Psoas muscle (tissue), 8 donors: ENCODE measurements at regions of chr3 and their contacts with region 1.

Region 1: DNA sequence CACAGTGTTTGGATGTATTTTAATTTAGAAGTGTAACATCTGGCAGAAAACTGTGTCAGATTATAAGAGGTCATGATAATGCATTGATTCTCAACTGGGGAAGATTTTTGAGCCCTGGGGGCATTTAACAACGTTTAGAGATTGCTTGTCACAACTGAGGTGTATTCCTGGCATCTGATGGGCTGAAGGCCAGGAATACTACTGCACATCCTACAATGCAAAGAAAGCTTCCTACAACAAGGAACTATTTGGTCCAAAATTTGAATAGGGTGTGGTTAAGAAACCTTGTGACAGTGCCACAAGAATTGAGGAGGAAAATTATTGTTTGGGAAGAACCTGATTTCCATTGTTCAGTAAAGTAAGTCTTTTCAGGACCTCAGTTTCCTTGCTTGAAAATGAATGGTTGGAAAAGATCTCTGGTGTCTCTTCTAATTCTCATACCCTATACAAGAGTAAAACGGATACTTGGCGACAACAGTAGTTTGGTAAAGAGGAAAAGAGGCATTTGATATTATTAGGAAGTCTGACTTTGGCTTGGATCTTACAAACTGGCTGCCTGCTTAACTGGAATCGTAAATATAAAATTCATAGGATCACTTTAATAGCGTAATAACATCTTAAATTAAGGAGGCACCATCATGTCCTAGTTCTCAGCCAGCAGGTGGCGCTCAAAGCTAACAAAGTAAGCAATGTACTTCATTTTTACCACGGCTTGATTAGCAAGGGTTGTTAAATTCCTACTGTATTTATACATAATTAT is 4.3 kb downstream of the DAZL start:
- DNase-seq: peak; percentile 73 to 88
- ATAC-seq: peak; percentile 56 to 93 (median 70)
- H3K4me3 ChIP-seq: peak overlapping the region; percentile 19
- H3K27ac ChIP-seq: no peak overlapping the region
- H3K4me1 ChIP-seq: peaks cover 4% of the 10 kb centered on the region
- H3K27me3 ChIP-seq: no peaks in the 10 kb centered on the region
- CTCF ChIP-seq: peak; percentile 90

Region 2: DNA sequence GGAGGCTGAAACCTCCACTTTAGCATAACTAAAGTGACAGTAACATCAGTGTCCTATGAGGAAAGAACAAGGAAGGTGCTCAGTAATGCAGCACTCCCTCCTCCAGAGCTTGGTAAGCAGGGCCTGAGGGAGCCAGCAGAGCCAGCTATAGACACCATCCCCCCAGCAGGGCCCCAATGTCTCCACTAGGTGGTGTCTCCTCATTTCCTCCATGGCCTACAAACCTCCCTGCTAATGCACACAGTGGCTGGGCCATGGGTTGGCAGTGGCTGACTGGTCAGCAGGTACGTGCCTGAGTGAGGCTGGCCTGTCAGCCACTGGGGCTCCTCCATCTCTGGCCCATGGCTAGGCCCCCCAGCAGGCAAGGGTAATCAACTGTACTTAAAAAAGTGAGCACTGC is 1549.4 kb before region 1 on chr3:
- intact Hi-C with region 1: no loop called
- DNase-seq: peak in 1 of 2 donors; percentile 63
- ATAC-seq: peak; percentile 58 to 85 (median 80)
- H3K4me3 ChIP-seq: no peak overlapping the region
- H3K27ac ChIP-seq: no peak overlapping the region
- H3K4me1 ChIP-seq: no peaks in the 10 kb centered on the region
- H3K27me3 ChIP-seq: no peaks in the 10 kb centered on the region
- CTCF ChIP-seq: peak; percentile 30

Region 3: DNA sequence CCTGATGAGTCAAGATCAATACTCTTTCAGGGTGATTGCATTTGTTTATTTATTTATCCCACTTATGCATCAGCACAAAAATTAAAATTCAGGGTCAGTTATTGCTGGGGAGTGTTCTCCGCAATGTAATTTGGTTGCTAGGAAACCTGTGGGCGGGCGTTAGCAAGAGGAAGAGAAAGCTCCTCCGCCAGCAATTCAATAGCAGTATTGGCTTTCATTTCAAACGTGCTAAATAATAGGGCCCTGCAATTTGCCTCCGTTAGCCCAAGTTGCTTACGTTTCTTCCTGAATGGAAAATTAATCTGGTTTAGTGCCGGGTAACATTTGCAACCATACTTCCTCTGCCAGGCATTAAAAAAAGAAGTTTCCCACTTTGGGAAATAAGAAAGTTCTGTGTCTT is 248.3 kb after region 1 on chr3:
- intact Hi-C with region 1: loop called in 1 of 2 experiments (anchors 10 kb)
- DNase-seq: peak; percentile 52 to 69
- ATAC-seq: peak; percentile 56 to 86 (median 66)
- H3K4me3 ChIP-seq: peak overlapping the region; percentile 47
- H3K27ac ChIP-seq: peak overlapping the region; percentile 74
- H3K4me1 ChIP-seq: peaks cover 43% of the 10 kb centered on the region
- H3K27me3 ChIP-seq: no peaks in the 10 kb centered on the region
- CTCF ChIP-seq: no peak

Region 4: DNA sequence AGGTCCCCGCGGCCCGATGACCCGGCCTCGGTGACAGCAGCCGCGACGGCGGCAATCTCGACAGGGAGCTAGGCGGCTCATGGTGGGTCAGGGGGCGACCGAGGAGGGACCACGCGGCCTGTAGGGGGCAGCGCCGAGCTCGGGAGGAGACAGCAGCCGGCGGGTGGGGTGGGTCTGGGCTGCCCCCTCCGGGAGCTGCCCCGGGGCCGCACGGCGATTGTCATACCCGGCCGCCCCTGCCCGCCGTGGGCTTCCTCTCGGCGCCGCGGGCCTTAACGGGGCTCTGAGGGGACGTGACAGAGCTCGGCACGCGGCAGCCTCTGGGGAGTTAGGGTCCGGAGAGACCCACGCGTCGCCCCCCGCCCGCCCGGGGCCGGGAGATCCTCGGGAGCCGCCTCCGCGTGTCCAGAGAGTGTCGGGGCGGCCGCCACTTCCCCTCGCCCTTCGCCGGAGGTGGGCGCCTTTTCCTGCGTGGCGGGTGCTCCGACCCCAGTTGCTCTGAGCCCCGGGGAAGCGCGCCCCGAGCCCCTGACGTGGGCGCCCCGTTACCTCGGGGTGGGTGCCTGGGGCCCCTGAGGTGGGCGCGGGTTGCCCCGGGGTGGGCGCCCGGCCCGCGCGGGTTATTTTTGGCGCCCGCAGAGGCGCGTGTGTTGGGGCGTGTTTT is 283.3 kb after region 1 on chr3:
- intact Hi-C with region 1: loop called in 1 of 2 experiments (anchors 5 kb)
- DNase-seq: peak; percentile 81 to 91
- ATAC-seq: peak; percentile 79 to 90 (median 86)
- H3K4me3 ChIP-seq: peak overlapping the region; percentile 97
- H3K27ac ChIP-seq: peak overlapping the region; percentile 99
- H3K4me1 ChIP-seq: peaks cover 61% of the 10 kb centered on the region
- H3K27me3 ChIP-seq: no peaks in the 10 kb centered on the region
- CTCF ChIP-seq: peak; percentile 64

Region 5: GRCh38 chr3:17032407-17033034 is 431.6 kb after region 1 on chr3:
- intact Hi-C with region 1: loop called in 1 of 2 experiments (anchors 1 kb)
- DNase-seq: no peak
- ATAC-seq: peak; percentile 57 to 84 (median 72)
- H3K4me3 ChIP-seq: no peak overlapping the region
- H3K27ac ChIP-seq: peak overlapping the region; percentile 12
- H3K4me1 ChIP-seq: peaks cover 15% of the 10 kb centered on the region
- H3K27me3 ChIP-seq: no peaks in the 10 kb centered on the region
- CTCF ChIP-seq: peak; percentile 62

Region 6: DNA sequence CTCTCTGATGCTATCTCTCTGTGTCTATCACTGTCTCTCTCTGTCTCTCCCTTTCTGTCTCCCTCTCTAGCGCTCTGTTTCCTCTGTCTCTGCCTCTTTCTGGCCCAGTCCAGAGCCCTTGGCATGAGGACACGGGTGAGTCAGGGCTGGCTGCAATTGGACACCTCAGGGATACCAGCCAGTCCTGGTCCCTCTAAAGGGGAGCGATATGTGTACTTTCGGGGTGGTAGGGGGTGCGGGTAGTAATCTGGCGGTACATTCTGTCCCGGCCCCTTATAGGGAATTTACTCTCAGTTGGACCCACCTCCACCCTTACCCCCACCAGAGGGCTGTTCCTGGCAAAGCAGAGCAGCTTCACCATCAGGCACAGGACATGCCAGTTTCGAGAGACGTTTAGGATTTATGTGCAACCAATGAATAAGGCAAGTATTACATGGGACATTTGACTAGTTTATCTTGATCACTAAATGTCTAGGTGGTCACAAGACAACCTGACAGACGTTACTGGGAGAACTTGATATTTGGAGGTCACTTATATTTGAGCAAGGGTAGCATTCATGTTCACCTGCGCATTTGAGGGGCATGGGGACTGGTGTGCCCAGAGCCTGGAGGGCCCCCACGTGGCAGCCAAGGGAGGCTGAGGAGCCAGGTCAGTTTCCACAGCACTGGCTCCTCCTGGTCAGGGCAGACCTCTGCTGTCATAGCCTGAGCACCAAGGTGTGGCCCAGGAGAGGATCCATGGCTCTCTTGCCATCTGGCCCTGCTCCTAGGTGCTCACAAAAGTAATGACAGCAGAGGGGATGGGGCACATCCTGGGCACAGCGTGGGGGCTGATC is 539.9 kb after region 1 on chr3:
- intact Hi-C with region 1: loop called in 1 of 2 experiments (anchors 10 kb)
- DNase-seq: peak; percentile 70 to 90
- ATAC-seq: peak; percentile 90 to 93 (median 92)
- H3K4me3 ChIP-seq: peak overlapping the region; percentile 60
- H3K27ac ChIP-seq: peak overlapping the region; percentile 78
- H3K4me1 ChIP-seq: peaks cover 19% of the 10 kb centered on the region
- H3K27me3 ChIP-seq: no peaks in the 10 kb centered on the region
- CTCF ChIP-seq: peak; percentile 33

Region 7: DNA sequence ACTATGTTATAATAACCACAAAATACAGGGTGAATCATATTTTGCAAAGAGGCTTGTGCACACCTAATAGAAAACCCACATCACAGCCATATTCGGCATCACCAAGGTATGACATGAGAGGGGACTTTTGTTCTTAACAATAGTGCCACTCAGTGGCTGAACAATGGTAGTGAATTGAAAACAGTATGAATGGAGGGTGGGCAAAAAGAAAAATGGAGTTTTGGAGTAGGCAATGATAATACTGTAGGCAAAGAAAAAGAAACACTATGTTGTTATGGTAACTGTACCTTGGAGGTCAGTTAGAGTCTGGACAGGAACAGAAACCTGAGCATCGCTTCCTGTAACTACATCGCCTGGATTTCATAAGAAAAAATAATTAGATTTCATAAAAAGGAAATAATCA is 632.4 kb after region 1 on chr3:
- intact Hi-C with region 1: loop called (anchors 2 to 5 kb)
- DNase-seq: no peak
- ATAC-seq: peak; percentile 89 to 96 (median 94)
- H3K4me3 ChIP-seq: no peak overlapping the region
- H3K27ac ChIP-seq: peak overlapping the region; percentile 66
- H3K4me1 ChIP-seq: peaks cover 33% of the 10 kb centered on the region
- H3K27me3 ChIP-seq: no peaks in the 10 kb centered on the region
- CTCF ChIP-seq: peak; percentile 82

Region 8: DNA sequence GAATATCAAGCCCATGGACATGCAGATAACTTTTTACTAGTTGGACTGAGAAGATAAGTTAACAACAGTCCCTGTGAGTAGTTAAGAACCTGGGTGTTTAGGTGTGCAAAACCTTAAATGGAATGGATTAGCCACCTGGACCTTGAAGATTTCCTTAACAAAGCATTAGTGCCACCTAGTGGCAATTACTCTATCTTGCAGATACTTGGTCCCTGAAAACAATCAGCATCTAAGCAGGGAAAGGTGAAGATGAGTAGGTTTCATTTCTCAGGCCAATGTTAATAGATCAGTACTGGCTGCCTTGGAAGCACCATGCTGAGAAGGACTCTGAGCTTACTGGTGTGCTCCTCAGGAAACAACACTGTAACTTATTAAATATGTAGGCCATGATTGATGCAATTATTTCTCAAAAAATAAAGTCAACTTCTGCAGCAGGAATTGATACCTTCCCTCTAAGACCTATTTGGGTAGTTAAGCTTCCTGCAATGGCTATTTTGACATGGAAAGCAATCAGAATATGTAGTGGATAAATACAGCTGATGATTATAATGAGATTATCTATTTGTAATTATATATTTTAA is 812.1 kb after region 1 on chr3:
- intact Hi-C with region 1: loop called in 1 of 2 experiments (anchors 5 kb)
- DNase-seq: no peak
- ATAC-seq: peak; percentile 61 to 82 (median 65)
- H3K4me3 ChIP-seq: no peak overlapping the region
- H3K27ac ChIP-seq: no peak overlapping the region
- H3K4me1 ChIP-seq: peaks cover 5% of the 10 kb centered on the region
- H3K27me3 ChIP-seq: no peaks in the 10 kb centered on the region
- CTCF ChIP-seq: peak; percentile 77